Activated T-helper 1 cell treated with anti-CD3 and anti-CD28 coated beads, Interleukin-12 subunit alpha, Interleukin-12 subunit beta, Interleukin-2, Interleukin-4 antibody, amounts not matched to agents 30 ng/mL and 10 ng/mL and 1 ng/mL, durations not matched to agents 14 hours and 24 hours and 36 hours (primary cell): ENCODE measurements at regions of chr2 and their contacts with region 1.

Region 1: GRCh38 chr2:212730994-212731393 is 192.4 kb upstream of the ERBB4 start:
- DNase-seq: no peak
- H3K4me3 Mint-ChIP-seq: no peak overlapping the region
- H3K27ac Mint-ChIP-seq: no peak overlapping the region
- H3K4me1 Mint-ChIP-seq: peaks cover 5% of the 10 kb centered on the region
- H3K27me3 Mint-ChIP-seq: no peaks in the 10 kb centered on the region

Region 2: GRCh38 chr2:212686285-212686895 is 44.6 kb before region 1 on chr2:
- intact Hi-C with region 1: no loop called
- DNase-seq: peak; percentile 3
- H3K4me3 Mint-ChIP-seq: no peak overlapping the region
- H3K27ac Mint-ChIP-seq: no peak overlapping the region
- H3K4me1 Mint-ChIP-seq: no peaks in the 10 kb centered on the region
- H3K27me3 Mint-ChIP-seq: peaks cover under 1% of the 10 kb centered on the region

Region 3: GRCh38 chr2:212958757-212959295 is 227.8 kb after region 1 on chr2:
- intact Hi-C with region 1: no loop called
- DNase-seq: no peak
- H3K4me3 Mint-ChIP-seq: no peak overlapping the region
- H3K27ac Mint-ChIP-seq: no peak overlapping the region
- H3K4me1 Mint-ChIP-seq: peaks cover 23% of the 10 kb centered on the region
- H3K27me3 Mint-ChIP-seq: peaks cover 3% of the 10 kb centered on the region

Region 4: DNA sequence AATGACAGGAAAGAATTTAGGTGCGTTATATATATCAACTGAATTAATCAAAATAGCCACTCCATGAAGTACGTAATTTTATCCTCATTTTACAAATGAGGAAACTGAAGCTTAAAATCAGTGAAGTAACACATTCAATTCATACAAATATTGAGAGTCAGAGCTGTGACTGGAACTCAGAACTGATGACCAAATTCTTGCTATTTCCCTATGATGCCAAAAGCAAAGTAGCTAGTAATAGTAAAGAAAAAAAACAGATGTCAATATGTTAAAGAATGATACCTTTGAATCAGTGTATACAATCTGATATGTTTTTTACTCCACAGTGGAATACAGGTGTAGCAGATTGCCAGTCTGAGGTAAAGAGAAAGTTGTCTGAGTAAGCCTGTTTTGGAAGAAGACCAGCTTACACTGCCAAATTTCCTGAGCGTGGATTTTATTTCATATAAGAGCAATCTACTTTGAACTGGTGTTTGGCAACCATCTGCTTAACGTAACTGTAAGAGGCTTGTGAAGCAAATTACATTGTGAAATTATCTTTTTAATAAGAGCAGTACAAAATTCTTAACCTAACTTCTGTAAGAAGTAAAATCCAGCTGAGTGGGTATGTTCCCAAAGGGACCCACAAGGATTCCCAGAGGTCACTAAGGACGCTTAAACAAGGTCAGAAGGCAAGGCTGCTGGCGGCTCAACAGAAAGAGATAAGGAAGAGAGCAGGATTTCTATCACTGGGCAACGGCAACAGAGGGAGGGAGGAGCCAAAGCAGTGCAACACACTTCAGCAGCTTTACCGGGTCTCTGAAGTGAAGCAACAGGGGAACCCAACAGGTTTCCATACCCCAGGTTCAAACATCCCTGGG is 334.8 kb after region 1 on chr2:
- intact Hi-C with region 1: loop called (anchors 1 kb)
- DNase-seq: no peak
- H3K4me3 Mint-ChIP-seq: no peak overlapping the region
- H3K27ac Mint-ChIP-seq: no peak overlapping the region
- H3K4me1 Mint-ChIP-seq: no peaks in the 10 kb centered on the region
- H3K27me3 Mint-ChIP-seq: peaks cover 2% of the 10 kb centered on the region